ENCODE measurements at regions of chr3 and their contacts with region 1.

Region 1: DNA sequence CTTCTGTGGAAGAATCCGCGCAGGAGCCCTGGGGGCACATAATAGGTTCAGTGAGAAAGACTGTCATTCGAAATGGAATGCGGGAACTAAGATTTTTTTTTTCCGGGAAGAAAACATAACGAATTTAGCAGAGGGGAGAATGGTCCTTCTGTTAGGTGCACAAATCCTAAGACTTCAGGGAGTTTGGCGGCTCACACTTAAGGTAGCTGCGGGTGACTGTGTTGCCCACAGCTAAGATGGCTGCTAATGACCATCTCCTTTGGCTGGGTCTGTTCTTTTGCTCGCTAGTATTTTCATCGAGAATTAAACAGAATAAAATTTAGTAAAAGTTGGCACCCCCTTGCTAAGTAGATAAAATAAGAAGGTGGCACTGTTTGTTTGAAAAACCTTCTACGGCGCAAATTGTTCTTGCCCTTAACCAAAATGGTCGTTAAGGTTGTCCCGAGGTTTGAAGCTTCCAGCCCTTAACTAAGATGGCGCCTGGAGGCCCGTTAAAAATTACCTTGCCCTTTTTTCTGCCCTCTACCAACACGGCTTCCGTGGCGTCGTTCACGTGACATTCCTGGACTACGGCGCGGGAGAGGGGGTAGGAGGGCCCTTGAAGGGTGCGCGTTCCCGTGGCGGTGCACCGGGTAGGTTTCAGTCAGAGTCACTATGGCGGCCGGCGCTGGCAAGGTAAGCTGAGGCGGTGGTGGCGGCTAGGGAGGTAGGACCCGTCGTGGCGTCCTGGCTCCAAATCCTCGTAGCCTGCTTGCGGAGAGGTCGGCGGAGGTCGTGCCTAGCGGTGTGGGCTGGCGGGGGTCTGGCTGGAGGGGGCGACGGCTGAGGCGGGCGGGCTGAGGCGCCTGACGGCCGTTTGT is at the start of gene SLMAP:
- DNase-seq: peak; percentile 87 to 95
- H3K4me3 ChIP-seq: peak within 1 kb of the TSS; percentile 74
- H3K27ac ChIP-seq: peak within 1 kb of the TSS; percentile 95
- H3K4me1 ChIP-seq: peaks cover 56% of the 10 kb centered on the region
- H3K27me3 ChIP-seq: no peaks in the 10 kb centered on the region
- CTCF ChIP-seq: no peak
- total RNA-seq, gene SLMAP: 116 and 119 TPM in 2 replicates

Region 2: DNA sequence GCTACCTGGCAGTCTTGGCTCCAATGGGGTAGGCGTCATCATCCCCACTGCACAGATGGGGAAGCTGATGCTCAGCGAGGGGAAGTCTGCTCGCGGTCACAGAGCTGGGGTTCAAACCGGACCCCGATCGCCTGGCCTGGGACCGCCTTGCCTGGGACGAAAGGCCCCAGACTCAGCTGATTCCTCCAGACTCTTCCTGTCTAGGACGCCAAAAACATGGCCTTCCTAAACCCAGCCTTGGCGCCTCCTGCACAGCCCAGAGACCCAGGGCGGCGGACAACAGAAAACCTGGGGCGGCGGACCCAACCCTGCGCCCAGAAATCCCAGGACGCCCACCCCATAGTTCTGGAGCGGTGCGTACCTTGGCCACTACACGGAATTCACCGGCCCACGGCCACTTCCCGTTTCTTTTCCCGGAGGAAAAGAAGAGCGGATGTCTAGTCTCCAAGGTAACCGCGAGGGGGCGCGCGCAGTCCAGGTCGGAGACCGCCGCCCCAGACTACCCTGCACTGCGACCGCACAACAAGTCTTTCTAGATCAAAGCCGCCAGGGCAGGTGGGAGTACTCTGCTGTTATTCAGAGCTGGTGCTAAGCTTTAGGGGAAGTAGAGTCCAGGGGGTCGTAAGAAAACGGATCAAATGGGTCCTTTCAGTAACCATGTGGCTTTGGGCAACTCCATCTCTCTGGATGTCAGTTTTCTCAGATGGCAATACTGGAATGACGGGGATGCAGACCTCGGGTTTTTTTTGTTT is 585.9 kb before region 1 on chr3:
- CTCF ChIA-PET with region 1: no interaction called
- POLR2A ChIA-PET with region 1: no interaction called
- intact Hi-C with region 1: loop called (anchors 5 kb)
- DNase-seq: peak; percentile 60 to 75
- H3K4me3 ChIP-seq: peak overlapping the region; percentile 54
- H3K27ac ChIP-seq: no peak overlapping the region
- H3K4me1 ChIP-seq: peaks cover 3% of the 10 kb centered on the region; the same call in 1 of the 2 replicates
- H3K27me3 ChIP-seq: no peaks in the 10 kb centered on the region
- CTCF ChIP-seq: peak; percentile 81

Region 3: GRCh38 chr3:57659806-57660439 is 96.0 kb before region 1 on chr3:
- CTCF ChIA-PET with region 1: no interaction called
- POLR2A ChIA-PET with region 1: interaction called, 10 read pairs
- intact Hi-C with region 1: no loop called
- DNase-seq: no peak
- H3K4me3 ChIP-seq: no peak overlapping the region
- H3K27ac ChIP-seq: no peak overlapping the region
- H3K4me1 ChIP-seq: peaks cover 7% of the 10 kb centered on the region; the same call in 1 of the 2 replicates
- H3K27me3 ChIP-seq: no peaks in the 10 kb centered on the region
- CTCF ChIP-seq: no peak

Region 4: DNA sequence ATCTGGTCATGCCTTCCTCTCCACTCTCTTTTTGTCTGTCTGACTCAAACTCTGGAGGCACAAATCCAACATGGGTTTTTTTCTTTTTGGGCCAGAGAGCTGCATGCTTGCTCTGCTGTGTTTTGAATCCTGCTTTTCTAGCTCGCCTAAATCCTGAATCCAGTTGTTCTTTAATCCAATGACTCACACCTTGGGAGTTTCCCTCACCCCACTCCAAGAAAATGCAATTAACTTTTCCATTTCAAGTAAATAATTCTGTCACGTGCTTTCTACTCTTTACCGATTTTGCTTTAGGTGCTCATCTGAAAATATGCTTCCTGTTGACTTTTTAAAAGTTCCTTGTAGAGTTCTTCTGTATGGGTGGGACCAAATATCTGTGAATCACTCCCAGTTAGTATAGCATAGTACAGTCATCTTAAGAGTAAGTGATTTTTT is 47.8 kb after region 1 on chr3:
- CTCF ChIA-PET with region 1: no interaction called
- POLR2A ChIA-PET with region 1: interaction called, 22 read pairs
- intact Hi-C with region 1: loop called (anchors 2 kb)
- DNase-seq: peak; percentile 70 to 92
- H3K4me3 ChIP-seq: no peak overlapping the region
- H3K27ac ChIP-seq: peak overlapping the region; percentile 91
- H3K4me1 ChIP-seq: peaks cover 57% of the 10 kb centered on the region
- H3K27me3 ChIP-seq: no peaks in the 10 kb centered on the region
- CTCF ChIP-seq: no peak

Region 5: GRCh38 chr3:57974796-57975388 is 219.0 kb after region 1 on chr3:
- CTCF ChIA-PET with region 1: no interaction called
- POLR2A ChIA-PET with region 1: no interaction called
- intact Hi-C with region 1: loop called (anchors 10 kb)
- DNase-seq: peak; percentile 63 to 91
- H3K4me3 ChIP-seq: no peak overlapping the region
- H3K27ac ChIP-seq: peak overlapping the region; percentile 100
- H3K4me1 ChIP-seq: peaks cover 98% of the 10 kb centered on the region
- H3K27me3 ChIP-seq: no peaks in the 10 kb centered on the region
- CTCF ChIP-seq: no peak